ENCODE measurements at regions of chr7 and their contacts with region 1.

Region 1: DNA sequence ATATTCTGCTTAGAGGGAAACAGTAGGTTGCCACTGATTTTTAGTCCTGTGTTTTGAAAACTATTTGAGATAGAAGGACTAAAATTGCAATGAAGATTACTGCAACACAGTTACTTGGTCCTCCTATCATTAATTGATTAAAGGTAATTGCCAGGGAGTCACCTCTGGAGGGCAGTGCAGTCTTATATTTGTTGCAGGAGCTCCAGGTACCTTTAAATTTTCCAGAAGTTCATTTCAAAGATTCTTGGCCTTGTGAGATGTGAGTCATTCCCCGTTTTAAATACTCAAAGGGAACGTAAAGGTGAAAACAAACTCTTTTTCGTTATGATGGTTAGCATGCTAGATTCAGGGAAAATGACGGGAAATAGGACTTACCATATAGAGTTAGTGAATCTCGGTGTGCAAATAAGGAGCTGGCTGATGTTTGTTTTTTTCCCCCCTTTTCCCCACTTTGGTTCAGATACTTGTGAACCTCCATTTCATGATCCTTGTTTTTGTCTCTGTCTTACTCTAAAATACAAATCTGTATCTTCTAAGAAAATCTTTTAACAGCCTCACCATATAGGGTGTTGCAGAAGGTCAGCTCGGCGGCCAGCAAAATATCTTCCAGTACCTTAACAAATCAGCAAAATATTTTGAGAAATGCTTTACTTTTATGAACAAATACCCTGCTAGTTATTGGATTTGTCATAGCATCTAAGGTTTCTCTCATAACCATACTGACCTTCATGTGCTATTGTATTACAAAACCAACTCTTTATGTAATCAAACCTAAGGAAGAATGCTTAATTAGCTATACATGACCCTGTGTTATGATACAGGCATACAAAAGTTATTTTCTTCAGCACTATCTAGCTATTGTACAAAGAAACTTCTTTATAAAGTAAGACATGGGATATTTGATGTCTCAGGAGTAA is 143.0 kb upstream of the HDAC9 start:
- DNase-seq: no peak
- ATAC-seq: peak; percentile 74
- H3K4me3 ChIP-seq: no peak overlapping the region
- H3K27ac ChIP-seq: no peak overlapping the region
- H3K4me1 ChIP-seq: no peaks in the 10 kb centered on the region
- H3K27me3 ChIP-seq: no peaks in the 10 kb centered on the region
- CTCF ChIP-seq: peak; percentile 42 to 73 (median 63); a peak in 5 of 6 replicates
- EP300 ChIP-seq: no peak
- POLR2A ChIP-seq: no peak
- RAD21 ChIP-seq: peak; percentile 81

Region 2: GRCh38 chr7:17706734-17707133 is 645.9 kb before region 1 on chr7:
- CTCF ChIA-PET with region 1: interaction called, 15 read pairs
- POLR2A ChIA-PET with region 1: no interaction called
- RAD21 ChIA-PET with region 1: interaction called, 5 read pairs
- SMC1A ChIA-PET with region 1: interaction called, 3 read pairs
- in situ Hi-C with region 1: no loop called
- intact Hi-C with region 1: no loop called
- DNase-seq: peak; percentile 12
- ATAC-seq: peak; percentile 93
- H3K4me3 ChIP-seq: no peak overlapping the region
- H3K27ac ChIP-seq: no peak overlapping the region
- H3K4me1 ChIP-seq: no peaks in the 10 kb centered on the region
- H3K27me3 ChIP-seq: no peaks in the 10 kb centered on the region
- CTCF ChIP-seq: peak; percentile 64 to 74 (median 68)
- EP300 ChIP-seq: no peak
- POLR2A ChIP-seq: no peak
- RAD21 ChIP-seq: peak; percentile 94

Region 3: GRCh38 chr7:17792075-17792936 is 560.3 kb before region 1 on chr7:
- CTCF ChIA-PET with region 1: no interaction called
- POLR2A ChIA-PET with region 1: no interaction called
- RAD21 ChIA-PET with region 1: no interaction called
- SMC1A ChIA-PET with region 1: no interaction called
- in situ Hi-C with region 1: no loop called
- intact Hi-C with region 1: no loop called
- DNase-seq: no peak
- ATAC-seq: no peak
- H3K4me3 ChIP-seq: no peak overlapping the region
- H3K27ac ChIP-seq: no peak overlapping the region
- H3K4me1 ChIP-seq: no peaks in the 10 kb centered on the region
- H3K27me3 ChIP-seq: no peaks in the 10 kb centered on the region
- CTCF ChIP-seq: no peak
- EP300 ChIP-seq: no peak
- POLR2A ChIP-seq: no peak
- RAD21 ChIP-seq: no peak

Region 4: DNA sequence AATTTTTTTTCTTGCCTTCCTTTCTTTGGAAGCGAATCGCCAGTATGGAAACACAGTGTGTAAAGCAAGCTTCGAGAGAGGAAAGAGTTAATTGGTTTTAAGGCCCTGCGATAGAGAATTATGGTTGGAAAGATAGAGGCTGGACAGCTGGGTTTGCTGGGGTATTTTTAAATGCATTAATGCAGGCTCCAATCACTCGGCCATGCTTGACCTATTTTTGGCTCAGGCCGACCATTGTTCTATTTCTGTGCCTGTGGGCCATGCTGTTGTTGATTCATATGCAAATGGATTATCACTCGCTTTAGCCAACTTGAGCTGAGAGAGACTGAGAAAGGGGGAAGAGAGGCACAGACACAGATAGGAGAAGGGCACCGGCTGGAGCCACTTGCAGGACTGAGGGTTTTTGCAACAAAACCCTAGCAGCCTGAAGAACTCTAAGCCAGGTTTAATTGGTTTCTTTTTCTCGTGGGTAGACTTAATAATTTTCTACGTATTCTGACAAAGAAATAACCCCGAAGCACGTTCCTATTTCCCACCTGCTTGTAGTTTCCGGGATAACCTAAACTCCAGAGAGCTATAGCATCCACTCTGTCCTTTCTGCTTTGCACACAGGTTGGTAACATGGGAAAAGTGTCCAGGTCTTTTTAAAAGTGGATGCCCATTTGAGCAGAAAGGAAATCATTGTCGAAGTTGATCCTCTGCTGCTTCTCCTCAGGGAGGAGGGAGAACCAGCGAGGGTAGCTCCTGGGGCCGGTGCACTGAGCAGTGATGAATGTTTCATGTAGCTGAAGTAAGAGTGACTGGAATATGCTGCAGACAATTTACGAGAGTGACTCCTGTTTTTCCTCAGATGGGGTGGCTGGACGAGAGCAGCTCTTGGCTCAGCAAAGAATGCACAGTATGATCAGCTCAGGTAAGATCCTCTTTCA is 143.1 kb after region 1 on chr7 and contains the start of gene HDAC9:
- CTCF ChIA-PET with region 1: interaction called, 15 read pairs
- POLR2A ChIA-PET with region 1: no interaction called
- RAD21 ChIA-PET with region 1: interaction called, 3 read pairs
- SMC1A ChIA-PET with region 1: no interaction called
- in situ Hi-C with region 1: no loop called
- intact Hi-C with region 1: no loop called
- DNase-seq: peak; percentile 56
- ATAC-seq: peak; percentile 89
- H3K4me3 ChIP-seq: peak within 1 kb of the TSS; percentile 67
- H3K27ac ChIP-seq: no peak within 1 kb of the TSS; the same call in 1 of the 2 replicates
- H3K4me1 ChIP-seq: peaks cover 14% of the 10 kb centered on the region; the same call in 1 of the 2 replicates
- H3K27me3 ChIP-seq: no peaks in the 10 kb centered on the region
- CTCF ChIP-seq: no peak
- EP300 ChIP-seq: no peak
- POLR2A ChIP-seq: 0 out of 2 replicates have a peak, but pooled peaks have one; percentile 39
- RAD21 ChIP-seq: no peak
- polyA plus RNA-seq, gene HDAC9: 0.73 to 0.74 TPM

Region 5: GRCh38 chr7:18570890-18571478 is 218.4 kb after region 1 on chr7:
- CTCF ChIA-PET with region 1: interaction called, 110 read pairs
- POLR2A ChIA-PET with region 1: no interaction called
- RAD21 ChIA-PET with region 1: interaction called, 30 read pairs
- SMC1A ChIA-PET with region 1: interaction called, 39 read pairs
- in situ Hi-C with region 1: no loop called
- intact Hi-C with region 1: loop called (anchors 1 kb)
- DNase-seq: no peak
- ATAC-seq: no peak
- H3K4me3 ChIP-seq: no peak overlapping the region
- H3K27ac ChIP-seq: no peak overlapping the region
- H3K4me1 ChIP-seq: no peaks in the 10 kb centered on the region
- H3K27me3 ChIP-seq: no peaks in the 10 kb centered on the region
- CTCF ChIP-seq: peak in 2 of 3 experiments; percentile 26 to 34; a peak in 2 of 6 replicates
- EP300 ChIP-seq: no peak
- POLR2A ChIP-seq: no peak
- RAD21 ChIP-seq: peak; percentile 43; the same call in 1 of the 2 replicates

Region 6: GRCh38 chr7:18610331-18610948 is 257.8 kb after region 1 on chr7:
- CTCF ChIA-PET with region 1: interaction called, 12 read pairs
- POLR2A ChIA-PET with region 1: no interaction called
- RAD21 ChIA-PET with region 1: interaction called, 19 read pairs
- SMC1A ChIA-PET with region 1: interaction called, 10 read pairs
- in situ Hi-C with region 1: no loop called
- intact Hi-C with region 1: loop called (anchors 2 kb)
- DNase-seq: no peak
- ATAC-seq: peak; percentile 75
- H3K4me3 ChIP-seq: no peak overlapping the region
- H3K27ac ChIP-seq: no peak overlapping the region
- H3K4me1 ChIP-seq: no peaks in the 10 kb centered on the region
- H3K27me3 ChIP-seq: no peaks in the 10 kb centered on the region
- CTCF ChIP-seq: peak; percentile 51 to 72 (median 65)
- EP300 ChIP-seq: no peak
- POLR2A ChIP-seq: no peak
- RAD21 ChIP-seq: peak; percentile 52

Region 7: GRCh38 chr7:19051767-19052375 is 699.3 kb after region 1 on chr7:
- CTCF ChIA-PET with region 1: interaction called, 11 read pairs
- POLR2A ChIA-PET with region 1: no interaction called
- RAD21 ChIA-PET with region 1: interaction called, 4 read pairs
- SMC1A ChIA-PET with region 1: interaction called, 3 read pairs
- in situ Hi-C with region 1: loop called (anchors 5 kb)
- intact Hi-C with region 1: loop called (anchors 1 kb)
- DNase-seq: no peak
- ATAC-seq: peak; percentile 76
- H3K4me3 ChIP-seq: no peak overlapping the region
- H3K27ac ChIP-seq: no peak overlapping the region
- H3K4me1 ChIP-seq: no peaks in the 10 kb centered on the region
- H3K27me3 ChIP-seq: no peaks in the 10 kb centered on the region
- CTCF ChIP-seq: peak; percentile 66 to 78 (median 68)
- EP300 ChIP-seq: no peak
- POLR2A ChIP-seq: no peak
- RAD21 ChIP-seq: peak; percentile 57

Measured in GM12878 (cell line).